Dendritic cell treated with granulocyte-macrophage colony-stimulating factor and Interleukin-4, amounts not matched to agents 40 ng/mL and 50 ng/mL, for 4 days (primary cell): ENCODE measurements at regions of chr6 and their contacts with region 1.

Region 1: DNA sequence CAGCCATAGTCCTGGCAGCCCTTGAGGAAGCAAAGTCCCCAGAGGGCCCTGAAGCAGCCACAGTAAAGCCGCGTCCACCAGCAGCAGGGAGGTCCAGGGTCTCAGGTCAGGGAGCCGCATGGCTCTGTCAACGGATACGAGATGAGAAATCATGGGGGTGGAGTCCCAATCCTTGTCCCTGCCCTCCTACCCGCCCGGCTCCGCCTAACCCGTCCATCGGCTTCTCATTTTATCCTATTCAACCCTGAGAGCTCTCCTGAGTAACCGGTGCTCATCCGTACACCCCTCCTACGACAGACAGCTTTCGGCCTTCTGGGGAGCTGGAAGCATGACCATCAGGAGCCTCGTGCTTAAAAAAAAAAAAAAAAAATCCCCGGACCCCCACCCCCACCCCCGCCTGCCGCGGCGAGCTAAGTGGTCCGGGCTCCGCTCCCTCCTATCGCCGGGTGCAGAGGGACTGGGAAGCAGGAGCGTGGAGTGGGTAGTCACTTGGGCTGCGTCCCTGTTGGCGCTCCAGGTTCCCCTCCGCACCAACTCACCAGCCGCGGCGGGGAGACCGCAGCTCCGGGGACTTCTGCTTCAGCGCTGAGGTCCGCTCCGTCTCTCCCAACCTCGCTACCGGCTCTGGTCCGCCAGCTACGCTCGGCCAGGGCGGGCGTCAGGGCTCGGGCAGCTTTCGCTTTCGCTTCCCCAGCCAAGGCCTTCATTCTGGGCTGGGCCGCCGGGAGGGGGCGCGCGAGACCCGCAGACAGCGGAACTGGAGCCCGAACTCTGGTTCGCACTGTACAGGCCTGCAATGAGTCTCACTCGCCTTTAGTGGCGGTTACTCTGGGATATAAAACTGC is at the start of gene TAP2:
- H3K4me3 Mint-ChIP-seq: peak within 1 kb of the TSS; percentile 83
- H3K27ac Mint-ChIP-seq: peak within 1 kb of the TSS; percentile 88
- H3K4me1 Mint-ChIP-seq: peaks cover 57% of the 10 kb centered on the region
- H3K27me3 Mint-ChIP-seq: no peaks in the 10 kb centered on the region

Region 2: GRCh38 chr6:32718879-32719278 is 119.5 kb before region 1 on chr6:
- intact Hi-C with region 1: no loop called
- H3K4me3 Mint-ChIP-seq: no peak overlapping the region
- H3K27ac Mint-ChIP-seq: no peak overlapping the region
- H3K4me1 Mint-ChIP-seq: peaks cover 8% of the 10 kb centered on the region
- H3K27me3 Mint-ChIP-seq: peaks cover 8% of the 10 kb centered on the region

Region 3: GRCh38 chr6:32853541-32854375 is 15.4 kb after region 1 on chr6 and contains the starts of genes PSMB9 and TAP1:
- intact Hi-C with region 1: loop called (anchors 2 kb)
- H3K4me3 Mint-ChIP-seq: peak within 1 kb of the TSS; percentile 95
- H3K27ac Mint-ChIP-seq: peak within 1 kb of the TSS; percentile 93
- H3K4me1 Mint-ChIP-seq: peaks cover 70% of the 10 kb centered on the region
- H3K27me3 Mint-ChIP-seq: no peaks in the 10 kb centered on the region